HEK293 (cell line): ENCODE measurements at regions of chr7 and their contacts with region 1.

Region 1: GRCh38 chr7:129163875-129164544 is 19.5 kb downstream of the TSPAN33 start:
- H3K4me3 ChIP-seq: no peak overlapping the region
- H3K27ac ChIP-seq: no peak overlapping the region
- H3K4me1 ChIP-seq: no peaks in the 10 kb centered on the region
- CTCF ChIP-seq: peak; percentile 57; the same call in 1 of the 2 replicates

Region 2: GRCh38 chr7:129146237-129146979 is 17.6 kb before region 1 on chr7:
- CTCF ChIA-PET with region 1: interaction called, 25 read pairs
- POLR2A ChIA-PET with region 1: interaction called, 3 read pairs
- H3K4me3 ChIP-seq: no peak overlapping the region
- H3K27ac ChIP-seq: no peak overlapping the region
- H3K4me1 ChIP-seq: 0 out of 2 replicates have a peak, but pooled peaks cover 2% of the 10 kb centered on the region
- CTCF ChIP-seq: no peak

Region 3: DNA sequence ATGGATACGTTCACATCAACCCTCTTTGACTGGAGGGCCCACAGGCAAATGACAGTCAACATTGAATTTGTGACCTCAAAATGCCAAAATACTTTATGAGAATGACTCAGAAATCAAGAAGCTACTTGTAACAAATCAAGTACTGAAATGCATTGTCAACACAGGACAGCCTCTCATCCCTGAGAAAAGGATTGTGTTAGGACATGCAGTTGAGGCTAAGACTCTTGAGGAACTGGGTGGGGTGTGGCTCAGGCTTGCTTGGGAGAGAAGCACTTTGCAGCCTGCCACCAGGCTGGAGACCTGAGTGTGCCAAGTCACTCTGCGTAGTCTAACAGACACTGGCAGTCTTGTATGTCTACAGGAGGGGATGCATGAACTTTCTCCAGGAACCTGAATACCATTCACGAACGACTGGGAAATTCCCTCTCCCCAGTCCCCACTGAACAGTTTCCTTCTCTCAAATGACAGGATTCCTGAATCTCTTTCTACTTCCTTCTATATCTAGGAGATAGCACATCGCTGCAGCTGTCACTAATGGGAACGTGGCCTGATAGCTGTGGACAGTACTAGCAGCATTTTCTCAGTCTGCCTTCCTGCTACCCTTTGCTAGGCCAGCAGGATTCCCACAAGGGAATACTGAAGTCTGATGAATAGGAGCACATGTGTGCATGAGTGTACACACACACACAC is 21.1 kb after region 1 on chr7:
- CTCF ChIA-PET with region 1: interaction called, 10 read pairs
- POLR2A ChIA-PET with region 1: no interaction called
- H3K4me3 ChIP-seq: no peak overlapping the region
- H3K27ac ChIP-seq: no peak overlapping the region
- H3K4me1 ChIP-seq: no peaks in the 10 kb centered on the region; the same call in 1 of the 2 replicates
- CTCF ChIP-seq: no peak

Region 4: DNA sequence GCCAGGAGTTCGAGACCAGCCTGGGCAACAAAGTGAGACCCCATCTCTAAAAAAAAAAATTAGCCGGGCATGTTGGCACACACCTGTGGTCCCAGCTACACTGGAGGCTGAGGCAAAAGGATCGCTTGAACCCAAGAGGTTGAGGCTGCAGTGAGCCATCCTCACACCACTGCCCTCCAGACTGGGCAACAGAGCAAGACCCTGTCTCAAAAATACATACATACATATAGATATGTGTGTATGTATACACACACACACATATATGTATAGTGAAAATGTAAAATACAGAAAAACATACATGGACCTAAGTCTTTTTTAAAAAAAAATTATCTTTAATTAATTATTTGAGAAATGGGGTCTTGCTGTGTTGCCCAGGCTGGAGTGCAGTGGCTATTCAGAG is 29.9 kb after region 1 on chr7:
- CTCF ChIA-PET with region 1: interaction called, 10 read pairs
- POLR2A ChIA-PET with region 1: no interaction called
- H3K4me3 ChIP-seq: no peak overlapping the region
- H3K27ac ChIP-seq: no peak overlapping the region
- H3K4me1 ChIP-seq: no peaks in the 10 kb centered on the region
- CTCF ChIP-seq: no peak

Region 5: GRCh38 chr7:129202058-129202777 is 38.2 kb after region 1 on chr7:
- CTCF ChIA-PET with region 1: interaction called, 69 read pairs
- POLR2A ChIA-PET with region 1: interaction called, 3 read pairs
- H3K4me3 ChIP-seq: no peak overlapping the region
- H3K27ac ChIP-seq: no peak overlapping the region
- H3K4me1 ChIP-seq: no peaks in the 10 kb centered on the region
- CTCF ChIP-seq: no peak

Region 6: DNA sequence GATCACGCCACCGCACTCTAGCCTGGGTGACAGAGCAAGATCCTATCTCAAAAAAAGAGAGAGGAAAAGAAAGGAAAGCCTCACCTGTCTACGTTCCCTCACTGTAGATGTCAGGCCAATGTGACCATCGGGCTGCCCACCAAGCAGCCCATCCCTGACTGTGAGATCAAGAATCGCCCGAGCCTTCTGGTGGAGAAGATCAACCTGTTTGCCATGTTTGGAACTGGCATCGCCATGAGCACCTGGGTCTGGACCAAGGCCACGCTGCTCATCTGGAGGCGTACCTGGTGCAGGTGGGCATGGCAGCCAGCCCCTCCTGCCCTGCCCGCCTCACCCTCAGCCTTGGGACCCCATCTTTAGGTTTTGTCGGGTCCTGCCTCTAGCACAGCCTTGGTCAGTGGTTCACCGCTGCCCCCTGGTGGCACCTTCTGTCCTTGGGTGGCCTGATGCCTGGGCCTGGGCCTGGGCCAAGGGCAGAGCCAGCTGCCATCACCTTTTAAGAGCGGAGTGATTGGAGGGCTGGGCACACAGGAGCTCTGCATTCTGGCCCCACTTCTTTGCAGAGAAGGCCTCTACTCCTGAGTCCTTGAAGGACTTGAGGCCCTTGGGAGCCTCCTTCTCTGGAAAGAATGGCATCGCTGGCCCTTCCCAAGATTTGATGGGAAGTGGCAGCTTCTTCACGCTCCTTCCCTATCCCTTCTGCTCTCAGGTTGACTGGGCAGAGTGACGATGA is 46.4 kb after region 1 on chr7:
- CTCF ChIA-PET with region 1: interaction called, 69 read pairs
- POLR2A ChIA-PET with region 1: interaction called, 3 read pairs
- H3K4me3 ChIP-seq: no peak overlapping the region
- H3K27ac ChIP-seq: no peak overlapping the region
- H3K4me1 ChIP-seq: no peaks in the 10 kb centered on the region
- CTCF ChIP-seq: peak; percentile 70